ENCODE measurements at regions of chr19 and their contacts with region 1.

Region 1: GRCh38 chr19:33416307-33417215 is 43.1 kb downstream of the CEBPG start:
- DNase-seq: peak; percentile 48 to 65 (median 60)
- H3K4me3 ChIP-seq: peak overlapping the region in 1 of 2 donors; percentile 8
- H3K4me3 Mint-ChIP-seq: peak overlapping the region in 7 of 8 donors; percentile 19 to 81 (median 62)
- H3K27ac ChIP-seq: no peak overlapping the region
- H3K27ac Mint-ChIP-seq: peak overlapping the region in 1 of 7 donors; percentile 19
- H3K4me1 ChIP-seq: peaks cover 6% of the 10 kb centered on the region
- H3K4me1 Mint-ChIP-seq: peaks cover 2 to 17% (median 5%) of the 10 kb centered on the region in 4 donors
- H3K27me3 ChIP-seq: no peaks in the 10 kb centered on the region
- H3K27me3 Mint-ChIP-seq: no peaks in the 10 kb centered on the region

Region 2: GRCh38 chr19:33430674-33431277 is 14.2 kb after region 1 on chr19:
- CTCF ChIA-PET with region 1: interaction called, 58 read pairs
- POLR2A ChIA-PET with region 1: interaction called, 4 read pairs
- intact Hi-C with region 1: no loop called
- DNase-seq: peak; percentile 52 to 70 (median 57)
- H3K4me3 ChIP-seq: no peak overlapping the region
- H3K4me3 Mint-ChIP-seq: peak overlapping the region; percentile 14 to 81 (median 58)
- H3K27ac ChIP-seq: peak overlapping the region; percentile 11
- H3K27ac Mint-ChIP-seq: peak overlapping the region; percentile 45 to 96 (median 87)
- H3K4me1 ChIP-seq: peaks cover 10% of the 10 kb centered on the region
- H3K4me1 Mint-ChIP-seq: peaks cover 4 to 22% (median 15%) of the 10 kb centered on the region in 4 donors
- H3K27me3 ChIP-seq: no peaks in the 10 kb centered on the region
- H3K27me3 Mint-ChIP-seq: no peaks in the 10 kb centered on the region

Measured in CD4-positive, alpha-beta memory T cell (primary cell).